Activated CD4-positive, alpha-beta T cell treated with anti-CD3 and anti-CD28 coated beads for 36 hours (primary cell): ENCODE measurements at regions of chr12 and their contacts with region 1.

Region 1: DNA sequence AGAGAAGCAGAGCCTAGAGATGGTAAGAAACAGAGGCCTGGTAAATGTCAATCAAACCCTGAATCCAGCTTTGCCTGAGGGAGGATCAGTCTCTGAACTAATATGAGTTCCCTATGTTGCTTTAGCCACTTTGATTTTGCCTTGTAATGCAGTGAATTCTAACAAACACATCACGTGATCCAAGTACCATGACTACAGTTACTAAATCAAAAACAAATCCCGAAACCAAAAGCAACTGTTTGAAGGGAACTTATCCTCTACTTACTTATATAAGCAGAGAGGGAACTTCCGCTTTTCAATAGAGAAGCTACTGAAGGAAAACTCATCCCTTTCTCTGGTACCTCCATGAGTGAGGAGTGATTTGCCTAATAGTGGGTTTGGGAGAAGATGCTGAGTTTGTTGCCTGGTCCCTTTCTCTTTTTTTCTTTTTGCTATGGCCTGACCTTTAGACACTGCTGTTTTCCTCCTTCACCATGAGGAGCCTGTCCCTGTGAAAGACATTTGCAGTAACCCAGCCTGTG is 7.7 kb upstream of the PPTC7 start:
- DNase-seq: no peak
- ATAC-seq: peak; percentile 88
- H3K4me3 Mint-ChIP-seq: peak overlapping the region; percentile 21
- H3K27ac Mint-ChIP-seq: peak overlapping the region; percentile 86
- H3K4me1 Mint-ChIP-seq: peaks cover 24% of the 10 kb centered on the region
- H3K27me3 Mint-ChIP-seq: no peaks in the 10 kb centered on the region

Region 2: DNA sequence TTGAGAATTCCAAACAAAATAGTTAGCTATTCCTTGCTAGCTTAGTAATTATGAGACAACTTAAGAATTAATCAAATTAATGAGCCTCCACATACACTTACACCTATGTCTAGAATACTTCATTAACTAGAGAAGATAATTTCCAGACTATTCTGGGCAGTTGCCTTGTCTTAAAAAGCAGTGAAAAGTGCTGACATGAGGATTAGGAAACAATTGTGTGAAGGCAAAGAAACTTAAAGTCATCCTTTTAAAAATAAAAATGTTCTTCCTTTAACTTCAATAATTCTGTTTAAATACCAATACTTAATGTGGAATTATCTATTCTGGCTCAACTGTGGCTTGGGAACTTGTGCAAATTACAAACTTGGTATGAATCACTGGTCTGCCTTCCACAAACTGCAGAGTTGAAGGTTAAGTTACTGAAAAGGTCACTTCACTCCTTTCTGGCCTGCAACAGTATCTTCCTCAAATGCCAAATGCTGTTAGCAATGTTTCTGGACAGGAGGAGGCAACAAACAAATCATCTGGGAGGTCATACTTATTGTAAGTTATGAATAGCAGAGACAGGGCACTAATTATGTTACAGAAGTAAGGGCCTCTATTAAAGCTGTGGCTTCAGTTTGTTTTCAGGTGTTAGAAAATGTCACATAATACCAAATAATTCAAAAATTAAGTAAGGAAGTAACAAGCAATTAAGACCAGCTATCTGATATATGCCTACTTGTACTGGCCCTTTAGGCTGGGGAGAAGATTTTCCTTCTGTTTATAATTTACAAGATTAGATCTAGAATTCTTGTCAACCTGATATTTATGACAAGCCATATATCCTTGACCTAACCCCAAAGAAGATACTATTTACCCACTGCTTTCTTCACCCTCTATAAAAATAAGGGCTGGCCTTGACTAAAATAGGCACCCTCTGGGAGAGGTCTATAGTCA is 26.9 kb before region 1 on chr12:
- CTCF ChIA-PET with region 1: no interaction called
- POLR2A ChIA-PET with region 1: interaction called, 7 read pairs
- intact Hi-C with region 1: loop called in 1 of 2 experiments (anchors 2 kb)
- DNase-seq: no peak
- ATAC-seq: no peak
- H3K4me3 Mint-ChIP-seq: no peak overlapping the region
- H3K27ac Mint-ChIP-seq: peak overlapping the region; percentile 76
- H3K4me1 Mint-ChIP-seq: peaks cover 73% of the 10 kb centered on the region
- H3K27me3 Mint-ChIP-seq: no peaks in the 10 kb centered on the region

Region 3: DNA sequence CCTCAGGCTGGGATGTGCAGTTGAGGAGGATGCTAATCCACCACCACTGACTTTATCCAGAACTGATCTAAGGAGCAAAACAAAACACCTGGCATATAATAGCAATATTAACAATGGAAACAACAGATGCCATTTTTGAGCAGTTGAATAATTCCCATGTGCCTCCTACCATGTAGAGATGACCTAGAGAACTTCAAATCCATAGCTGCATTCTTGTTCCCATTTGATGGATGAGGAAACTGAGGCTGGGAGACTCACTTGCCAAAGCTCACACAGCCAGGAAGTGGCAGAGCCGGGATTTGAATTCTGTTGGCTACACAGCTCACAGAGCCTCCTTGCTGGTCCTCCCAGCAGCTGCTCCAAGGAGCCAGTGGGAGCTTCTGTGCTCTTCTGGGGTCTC is 485.3 kb after region 1 on chr12:
- CTCF ChIA-PET with region 1: no interaction called
- POLR2A ChIA-PET with region 1: interaction called, 11 read pairs
- intact Hi-C with region 1: no loop called
- DNase-seq: no peak
- ATAC-seq: no peak
- H3K4me3 Mint-ChIP-seq: no peak overlapping the region
- H3K27ac Mint-ChIP-seq: no peak overlapping the region
- H3K4me1 Mint-ChIP-seq: peaks cover 4% of the 10 kb centered on the region
- H3K27me3 Mint-ChIP-seq: no peaks in the 10 kb centered on the region